A549 (cell line): ENCODE measurements at regions of chr2 and their contacts with region 1.

Region 1: DNA sequence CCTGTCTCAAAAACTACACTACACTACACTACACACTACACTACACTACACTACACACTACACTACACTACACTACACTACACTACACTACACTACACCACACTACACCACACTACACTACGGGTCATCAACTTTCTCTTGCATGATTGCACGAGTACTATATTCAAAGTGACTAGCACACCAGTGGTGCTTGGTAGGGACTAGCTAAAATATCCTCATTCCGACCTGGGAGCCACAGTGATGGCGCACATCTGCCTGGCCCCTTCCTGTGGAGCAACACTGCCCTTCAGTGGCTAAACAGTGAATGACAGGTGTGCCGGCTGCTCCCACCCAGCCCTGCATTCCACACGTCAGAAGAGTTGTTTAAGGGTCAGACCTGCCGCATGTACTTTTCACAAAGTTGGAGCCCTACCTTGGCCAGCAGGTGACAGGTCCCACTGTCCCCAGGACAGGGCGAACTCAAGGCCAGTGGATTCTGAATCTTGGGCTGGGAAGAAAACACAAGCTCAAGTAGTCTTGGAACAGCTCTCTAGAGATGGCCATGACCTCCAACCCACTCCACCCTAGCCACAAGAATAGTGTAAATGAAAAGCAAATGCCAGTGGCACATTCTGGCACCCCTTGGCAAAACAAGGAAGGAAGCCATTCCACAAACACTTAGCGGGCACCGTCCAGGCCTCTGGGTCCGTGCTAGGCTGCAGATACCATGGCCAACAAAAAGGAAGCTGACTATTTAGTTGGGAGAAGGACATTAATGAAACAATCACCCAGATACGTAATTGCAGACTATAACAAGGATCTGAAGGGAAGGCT is 79.7 kb upstream of the MSH2 start:
- DNase-seq: peak; percentile 81 to 92
- ATAC-seq: peak; percentile 89 to 93
- H3K4me3 ChIP-seq: no peak overlapping the region
- H3K27ac ChIP-seq: peak overlapping the region; percentile 48 to 77
- H3K4me1 ChIP-seq: peaks cover 44% of the 10 kb centered on the region
- CTCF ChIP-seq: peak; percentile 97
- EP300 ChIP-seq: no peak
- POLR2A ChIP-seq: no peak
- RAD21 ChIP-seq: peak; percentile 99 to 100

Region 2: DNA sequence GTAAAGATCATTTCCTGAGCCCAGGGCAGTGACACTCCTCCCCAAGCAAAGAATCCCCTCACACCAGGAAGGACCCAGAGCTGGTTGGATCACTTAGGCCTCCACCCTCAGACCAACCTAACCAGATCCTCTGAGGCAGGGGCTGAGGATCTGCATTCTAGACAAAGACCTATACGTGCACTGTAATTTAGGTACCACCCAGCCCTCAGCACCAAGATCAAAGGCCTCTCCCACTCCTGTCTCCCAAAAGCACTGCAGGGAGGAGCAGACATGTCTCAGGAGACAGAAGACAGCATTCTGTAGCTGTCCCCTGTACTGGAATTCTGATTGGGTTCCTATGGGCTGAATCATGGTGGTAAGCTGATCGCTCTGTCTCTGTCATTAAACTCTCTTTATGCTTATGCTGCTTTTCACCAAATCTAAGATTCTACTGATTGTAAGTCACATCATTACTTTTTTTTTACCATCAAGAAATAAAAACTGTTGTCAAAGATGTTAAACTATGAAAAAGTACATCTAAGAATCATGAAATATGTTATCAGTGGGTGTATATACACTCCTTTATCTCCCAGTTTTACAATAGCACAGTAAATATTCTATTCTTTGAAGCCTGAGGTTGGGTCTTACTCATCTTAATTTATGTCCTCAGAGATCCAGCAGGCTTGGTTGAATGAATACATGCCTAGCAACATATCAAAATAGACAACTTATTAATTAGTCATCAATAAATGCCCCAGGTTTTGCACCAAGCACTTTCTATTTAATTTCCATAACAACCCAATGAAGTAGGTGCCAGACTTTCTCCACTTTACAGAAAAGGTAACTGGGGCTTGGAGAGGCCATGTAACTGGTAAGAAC is 436.0 kb before region 1 on chr2:
- CTCF ChIA-PET with region 1: interaction called, 20 read pairs
- POLR2A ChIA-PET with region 1: interaction called, 3 read pairs
- DNase-seq: no peak
- ATAC-seq: no peak
- H3K4me3 ChIP-seq: no peak overlapping the region
- H3K27ac ChIP-seq: peak overlapping the region; percentile 87 to 91
- H3K4me1 ChIP-seq: peaks cover 51% of the 10 kb centered on the region
- CTCF ChIP-seq: no peak
- EP300 ChIP-seq: no peak
- POLR2A ChIP-seq: no peak
- RAD21 ChIP-seq: no peak

Region 3: GRCh38 chr2:46942139-46942517 is 381.1 kb before region 1 on chr2:
- CTCF ChIA-PET with region 1: interaction called, 18 read pairs
- POLR2A ChIA-PET with region 1: no interaction called
- DNase-seq: peak in 1 of 2 experiments; percentile 38
- ATAC-seq: peak in 1 of 2 experiments; percentile 23; a peak in 3 of 6 replicates
- H3K4me3 ChIP-seq: peak overlapping the region; percentile 72
- H3K27ac ChIP-seq: peak overlapping the region; percentile 92 to 95
- H3K4me1 ChIP-seq: peaks cover 48% of the 10 kb centered on the region
- CTCF ChIP-seq: no peak
- EP300 ChIP-seq: no peak
- POLR2A ChIP-seq: no peak
- RAD21 ChIP-seq: no peak

Region 4: DNA sequence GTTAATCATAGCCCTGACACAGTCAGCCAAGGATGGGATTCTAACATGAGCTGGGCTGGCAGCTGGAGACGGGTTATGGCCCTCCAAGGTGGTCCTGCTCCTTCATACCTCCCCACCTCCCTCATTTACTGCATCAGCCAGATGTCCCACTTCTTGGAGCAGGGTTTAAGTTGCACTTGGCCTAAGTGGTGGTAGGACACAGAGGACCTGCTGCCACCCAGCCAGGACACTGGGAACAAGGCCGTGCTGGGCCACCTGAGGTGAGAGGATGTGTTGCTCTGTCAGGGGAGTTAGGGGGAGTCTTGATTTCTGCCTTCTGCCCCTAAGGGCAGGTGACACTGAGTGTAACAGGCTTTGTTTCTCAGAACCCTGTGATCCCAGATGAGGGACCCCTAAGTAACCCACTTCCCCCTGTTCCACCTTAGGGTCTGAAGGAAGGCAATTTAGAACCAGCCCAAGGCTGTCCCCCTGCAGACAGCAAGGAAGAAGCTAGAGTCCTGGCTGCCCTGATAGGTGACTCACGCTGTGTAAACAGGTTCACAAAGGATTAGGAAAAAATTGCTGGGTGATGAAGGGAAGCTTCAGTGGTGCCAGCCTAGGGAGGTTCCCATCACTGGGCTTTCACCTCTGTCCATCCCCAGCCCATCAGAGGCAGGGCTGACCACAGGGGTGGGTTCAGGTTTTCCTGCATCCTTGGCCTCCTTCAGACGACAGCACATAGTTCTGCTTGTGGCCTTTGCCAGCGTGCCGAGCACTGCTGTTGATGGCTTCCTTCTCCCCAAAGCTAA is 293.3 kb before region 1 on chr2:
- CTCF ChIA-PET with region 1: interaction called, 15 read pairs
- POLR2A ChIA-PET with region 1: interaction called, 3 read pairs
- DNase-seq: peak; percentile 84 to 85
- ATAC-seq: peak; percentile 45 to 71
- H3K4me3 ChIP-seq: no peak overlapping the region
- H3K27ac ChIP-seq: peak overlapping the region; percentile 97
- H3K4me1 ChIP-seq: peaks cover 80% of the 10 kb centered on the region
- CTCF ChIP-seq: no peak
- EP300 ChIP-seq: peak in 1 of 2 experiments; percentile 46; a peak in 2 of 5 replicates
- POLR2A ChIP-seq: no peak
- RAD21 ChIP-seq: peak; percentile 43 to 44

Region 5: GRCh38 chr2:47165001-47165555 is 158.1 kb before region 1 on chr2:
- CTCF ChIA-PET with region 1: interaction called, 23 read pairs
- POLR2A ChIA-PET with region 1: no interaction called
- DNase-seq: no peak
- ATAC-seq: no peak
- H3K4me3 ChIP-seq: no peak overlapping the region
- H3K27ac ChIP-seq: no peak overlapping the region
- H3K4me1 ChIP-seq: peaks cover 91% of the 10 kb centered on the region
- CTCF ChIP-seq: no peak
- EP300 ChIP-seq: no peak
- POLR2A ChIP-seq: no peak
- RAD21 ChIP-seq: no peak

Region 6: DNA sequence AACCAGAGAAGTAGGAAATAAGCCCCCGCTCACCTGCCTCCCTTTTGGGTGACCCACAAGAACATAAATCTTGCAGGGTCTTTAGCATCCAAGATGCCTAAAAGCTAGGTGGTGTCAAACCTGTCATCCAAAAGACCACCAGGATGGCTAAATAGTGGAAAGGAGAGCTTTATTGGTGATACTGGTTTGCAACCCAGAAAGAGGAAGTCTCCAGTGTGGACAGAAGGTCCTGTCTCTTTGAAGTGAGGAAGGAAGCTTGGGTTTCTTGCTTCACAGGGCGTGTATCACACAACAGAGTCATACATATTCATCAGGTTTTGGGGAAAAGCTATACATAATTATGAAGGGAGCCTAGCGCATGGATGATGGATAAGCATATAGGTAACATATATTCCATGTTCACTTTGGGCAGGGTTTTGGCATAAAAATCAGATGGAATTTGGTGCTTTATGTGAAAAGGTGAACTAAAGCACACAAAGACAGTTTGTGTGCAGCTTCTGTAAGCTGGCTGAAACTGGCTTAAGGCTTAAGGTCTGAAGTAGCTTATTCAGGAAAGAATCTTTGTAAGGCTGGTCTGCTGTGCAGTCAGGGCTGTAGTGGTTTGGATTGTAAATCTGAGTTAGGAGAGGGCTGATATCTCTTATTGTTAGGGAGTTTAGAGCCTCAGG is 22.5 kb before region 1 on chr2:
- CTCF ChIA-PET with region 1: interaction called, 32 read pairs
- POLR2A ChIA-PET with region 1: no interaction called
- DNase-seq: no peak
- ATAC-seq: no peak
- H3K4me3 ChIP-seq: no peak overlapping the region
- H3K27ac ChIP-seq: peak overlapping the region; percentile 72 to 78; a peak in 5 of 6 replicates
- H3K4me1 ChIP-seq: peaks cover 50% of the 10 kb centered on the region
- CTCF ChIP-seq: no peak
- EP300 ChIP-seq: no peak
- POLR2A ChIP-seq: no peak
- RAD21 ChIP-seq: no peak

Region 7: GRCh38 chr2:47373747-47374146 is 50.5 kb after region 1 on chr2:
- CTCF ChIA-PET with region 1: interaction called, 10 read pairs
- POLR2A ChIA-PET with region 1: no interaction called
- DNase-seq: peak; percentile 48 to 60
- ATAC-seq: peak; percentile 62 to 77; a peak in 4 of 6 replicates
- H3K4me3 ChIP-seq: no peak overlapping the region
- H3K27ac ChIP-seq: no peak overlapping the region
- H3K4me1 ChIP-seq: peaks cover under 1% of the 10 kb centered on the region; the same call in 1 of the 3 replicates
- CTCF ChIP-seq: peak; percentile 38; the same call in 2 of the 3 replicates
- EP300 ChIP-seq: no peak
- POLR2A ChIP-seq: no peak
- RAD21 ChIP-seq: peak; percentile 59 to 67; a peak in 4 of 5 replicates